ENCODE measurements at regions of chr16 and their contacts with region 1.

Region 1: GRCh38 chr16:64292953-64293352 is 828.9 kb downstream of the CDH11 start:
- DNase-seq: no peak
- ATAC-seq: no peak
- H3K4me3 ChIP-seq: no peak overlapping the region
- H3K27ac ChIP-seq: no peak overlapping the region
- H3K4me1 ChIP-seq: peaks cover 11% of the 10 kb centered on the region
- H3K27me3 ChIP-seq: no peaks in the 10 kb centered on the region
- CTCF ChIP-seq: no peak

Region 2: GRCh38 chr16:64151990-64152767 is 140.8 kb before region 1 on chr16:
- CTCF ChIA-PET with region 1: no interaction called
- POLR2A ChIA-PET with region 1: no interaction called
- intact Hi-C with region 1: loop called (anchors 10 kb)
- DNase-seq: no peak
- ATAC-seq: no peak
- H3K4me3 ChIP-seq: no peak overlapping the region
- H3K27ac ChIP-seq: no peak overlapping the region
- H3K4me1 ChIP-seq: peaks cover 28% of the 10 kb centered on the region
- H3K27me3 ChIP-seq: no peaks in the 10 kb centered on the region
- CTCF ChIP-seq: no peak